Activated B cell treated with CpG ODN at 0.5 μM for 24 hours (primary cell): ENCODE measurements at regions of chr17 and their contacts with region 1.

Region 1: DNA sequence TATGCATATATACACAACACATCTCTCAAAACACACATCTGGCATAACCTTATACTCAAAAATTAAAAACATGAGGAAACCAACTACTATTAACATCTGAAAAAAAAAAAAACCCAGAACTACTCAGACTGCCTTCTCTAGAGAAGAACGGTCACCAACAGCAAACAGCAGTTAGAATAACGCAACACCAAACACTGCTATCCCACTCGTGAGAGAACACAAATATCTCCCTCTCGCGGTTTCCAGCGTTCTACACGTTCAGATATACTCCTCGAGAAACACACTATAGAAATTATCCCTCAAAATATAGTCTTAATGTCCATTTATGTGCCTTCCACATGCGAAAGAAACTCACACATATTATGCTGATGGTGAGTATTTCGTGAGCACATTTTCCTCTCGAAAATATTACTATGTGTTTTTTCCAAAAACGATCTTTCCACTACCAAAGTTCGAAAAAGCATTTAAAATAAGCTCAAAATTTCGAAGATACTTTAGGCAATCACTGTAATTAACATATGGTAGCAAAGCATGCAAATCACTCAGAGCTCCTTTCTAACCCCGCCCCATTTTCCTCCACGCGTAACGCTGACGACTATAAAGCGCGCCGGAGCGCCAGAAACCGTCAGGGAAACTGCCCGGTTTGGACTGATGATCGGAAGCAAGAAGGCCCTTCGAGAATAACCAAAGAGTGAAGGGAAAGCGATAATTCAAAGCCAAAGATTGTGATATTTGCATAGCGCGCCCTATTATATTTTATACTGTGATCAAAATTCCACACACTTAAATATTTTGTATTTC is 60.1 kb downstream of the TEX14 start:
- DNase-seq: peak; percentile 91
- ATAC-seq: peak; percentile 83
- H3K4me3 Mint-ChIP-seq: no peak overlapping the region
- H3K27ac Mint-ChIP-seq: no peak overlapping the region
- H3K4me1 Mint-ChIP-seq: peaks cover 3% of the 10 kb centered on the region
- H3K27me3 Mint-ChIP-seq: no peaks in the 10 kb centered on the region
- CTCF ChIP-seq: no peak

Region 2: DNA sequence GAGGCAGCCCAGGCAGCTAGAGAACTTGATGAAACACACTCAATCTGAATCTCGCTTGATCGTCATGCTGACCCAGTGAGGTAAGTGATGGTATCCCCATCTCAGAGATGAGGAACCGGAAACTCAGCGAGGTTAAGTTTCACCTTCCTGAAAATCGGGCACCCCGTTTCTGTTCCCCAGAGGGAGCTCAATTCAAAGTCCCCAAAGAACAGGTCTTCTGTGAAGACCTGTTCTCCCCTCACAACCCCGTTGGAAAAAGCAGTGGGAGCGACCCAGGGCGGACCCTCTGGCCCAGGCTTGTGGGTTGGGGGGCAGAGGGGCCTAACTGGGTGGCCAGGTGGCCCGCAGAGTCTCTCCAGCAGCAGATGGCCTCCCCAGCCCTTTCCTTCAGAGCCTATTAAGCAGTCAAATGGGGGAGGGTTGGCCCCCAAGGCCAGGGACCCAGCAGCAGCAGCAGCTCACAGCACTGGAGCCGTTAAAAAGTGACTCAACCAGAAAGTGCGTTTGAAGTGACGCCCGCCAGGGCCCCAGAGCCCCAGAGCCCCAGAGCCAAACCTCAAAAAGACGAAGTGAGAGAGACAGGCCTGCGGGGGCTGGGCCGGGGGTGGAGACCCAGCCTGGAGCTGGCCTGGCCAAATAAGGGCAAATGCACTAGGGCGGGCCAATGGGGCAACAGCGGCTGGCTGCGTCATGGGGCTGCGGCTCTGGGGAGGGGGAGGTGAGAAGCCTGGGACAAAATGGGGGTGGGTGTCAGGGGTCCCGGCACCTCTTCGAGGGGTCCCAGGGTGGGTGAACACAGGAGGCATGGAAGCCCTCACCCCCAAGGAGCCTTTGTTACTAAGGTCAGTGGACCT is 293.9 kb before region 1 on chr17:
- CTCF ChIA-PET with region 1: no interaction called
- POLR2A ChIA-PET with region 1: interaction called, 48 read pairs
- intact Hi-C with region 1: loop called (anchors 5 kb)
- DNase-seq: peak; percentile 84
- ATAC-seq: peak; percentile 63
- H3K4me3 Mint-ChIP-seq: peak overlapping the region; percentile 100
- H3K27ac Mint-ChIP-seq: peak overlapping the region; percentile 99
- H3K4me1 Mint-ChIP-seq: peaks cover 97% of the 10 kb centered on the region
- H3K27me3 Mint-ChIP-seq: no peaks in the 10 kb centered on the region
- CTCF ChIP-seq: no peak

Region 3: DNA sequence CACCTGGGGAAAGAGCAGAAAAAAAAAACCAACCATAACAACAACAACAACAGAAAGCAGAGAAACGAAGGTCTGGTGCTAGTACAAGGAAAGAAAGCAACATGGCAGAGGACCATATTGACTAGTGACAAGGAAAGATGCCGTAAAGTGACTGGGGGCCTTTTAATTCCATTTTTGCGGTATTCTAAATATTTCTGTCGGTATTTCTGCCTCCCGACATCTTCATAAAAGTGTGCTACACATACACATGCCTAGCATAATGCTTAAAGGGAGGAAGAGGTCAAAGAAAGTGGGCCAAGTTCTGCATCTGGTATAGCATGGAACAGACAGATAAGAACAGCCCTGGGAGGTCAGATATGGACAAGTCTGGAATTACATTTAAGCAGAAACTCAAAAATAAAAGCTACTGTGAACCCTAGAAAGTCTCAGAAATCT is 194.9 kb before region 1 on chr17:
- CTCF ChIA-PET with region 1: no interaction called
- POLR2A ChIA-PET with region 1: no interaction called
- intact Hi-C with region 1: no loop called
- DNase-seq: no peak
- ATAC-seq: no peak
- H3K4me3 Mint-ChIP-seq: no peak overlapping the region
- H3K27ac Mint-ChIP-seq: no peak overlapping the region
- H3K4me1 Mint-ChIP-seq: no peaks in the 10 kb centered on the region
- H3K27me3 Mint-ChIP-seq: no peaks in the 10 kb centered on the region
- CTCF ChIP-seq: no peak

Region 4: DNA sequence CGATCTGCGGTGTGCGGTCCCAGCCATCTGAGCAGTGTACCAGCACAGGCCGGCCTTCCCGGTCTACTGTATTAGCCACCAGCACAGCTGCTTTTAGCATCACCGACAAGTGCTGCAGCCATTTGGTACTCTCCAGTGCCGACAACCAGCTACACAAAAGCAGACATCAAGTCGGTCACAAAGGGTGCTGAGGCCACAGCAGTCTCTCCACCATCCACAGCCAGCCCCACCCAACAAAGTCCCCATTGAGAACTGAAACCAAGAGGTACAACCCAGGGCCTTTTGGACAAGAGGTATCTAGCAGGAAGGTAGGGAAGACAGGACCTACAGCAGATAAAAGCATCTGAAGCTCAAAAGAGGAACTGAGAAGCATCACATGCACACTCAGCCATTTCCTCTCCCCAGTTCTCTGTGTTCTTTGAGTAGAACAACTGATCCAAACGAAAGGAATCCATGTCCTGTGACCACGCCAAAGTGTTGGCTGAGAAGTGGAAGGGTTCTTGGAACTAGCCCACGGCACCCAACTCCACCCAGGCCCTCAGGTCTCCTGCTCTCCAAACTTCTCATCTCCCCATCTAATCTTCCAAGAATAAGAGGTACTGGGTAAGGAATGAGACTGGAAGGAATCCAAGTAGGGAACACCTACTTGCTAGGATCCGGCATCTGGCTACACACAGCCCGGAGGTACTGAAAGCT is 126.7 kb before region 1 on chr17:
- CTCF ChIA-PET with region 1: no interaction called
- POLR2A ChIA-PET with region 1: interaction called, 26 read pairs
- intact Hi-C with region 1: no loop called
- DNase-seq: peak; percentile 44
- ATAC-seq: peak; percentile 94
- H3K4me3 Mint-ChIP-seq: peak overlapping the region; percentile 64
- H3K27ac Mint-ChIP-seq: peak overlapping the region; percentile 97
- H3K4me1 Mint-ChIP-seq: peaks cover 28% of the 10 kb centered on the region
- H3K27me3 Mint-ChIP-seq: no peaks in the 10 kb centered on the region
- CTCF ChIP-seq: no peak

Region 5: DNA sequence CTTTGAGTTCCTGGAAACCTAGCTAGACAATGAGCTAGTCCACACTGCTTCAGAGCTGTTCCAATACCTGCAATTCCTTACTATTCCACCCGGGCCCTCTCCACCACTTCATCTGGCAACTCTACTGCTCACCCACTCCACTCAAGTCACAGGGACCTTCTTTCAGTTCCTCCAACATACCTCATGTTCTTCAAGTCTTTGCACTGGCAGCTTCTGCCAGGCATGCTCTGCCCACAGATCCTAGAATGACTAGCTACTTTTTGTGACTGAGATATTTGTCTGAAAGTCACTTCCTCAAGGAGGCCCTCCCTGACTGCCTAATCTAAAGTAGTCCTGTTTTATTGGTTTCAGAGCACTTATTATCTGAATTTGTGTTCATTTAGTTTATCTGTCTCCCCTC is 26.3 kb before region 1 on chr17:
- CTCF ChIA-PET with region 1: no interaction called
- POLR2A ChIA-PET with region 1: interaction called, 14 read pairs
- intact Hi-C with region 1: no loop called
- DNase-seq: no peak
- ATAC-seq: peak; percentile 42
- H3K4me3 Mint-ChIP-seq: no peak overlapping the region
- H3K27ac Mint-ChIP-seq: no peak overlapping the region
- H3K4me1 Mint-ChIP-seq: no peaks in the 10 kb centered on the region
- H3K27me3 Mint-ChIP-seq: no peaks in the 10 kb centered on the region
- CTCF ChIP-seq: no peak

Region 6: DNA sequence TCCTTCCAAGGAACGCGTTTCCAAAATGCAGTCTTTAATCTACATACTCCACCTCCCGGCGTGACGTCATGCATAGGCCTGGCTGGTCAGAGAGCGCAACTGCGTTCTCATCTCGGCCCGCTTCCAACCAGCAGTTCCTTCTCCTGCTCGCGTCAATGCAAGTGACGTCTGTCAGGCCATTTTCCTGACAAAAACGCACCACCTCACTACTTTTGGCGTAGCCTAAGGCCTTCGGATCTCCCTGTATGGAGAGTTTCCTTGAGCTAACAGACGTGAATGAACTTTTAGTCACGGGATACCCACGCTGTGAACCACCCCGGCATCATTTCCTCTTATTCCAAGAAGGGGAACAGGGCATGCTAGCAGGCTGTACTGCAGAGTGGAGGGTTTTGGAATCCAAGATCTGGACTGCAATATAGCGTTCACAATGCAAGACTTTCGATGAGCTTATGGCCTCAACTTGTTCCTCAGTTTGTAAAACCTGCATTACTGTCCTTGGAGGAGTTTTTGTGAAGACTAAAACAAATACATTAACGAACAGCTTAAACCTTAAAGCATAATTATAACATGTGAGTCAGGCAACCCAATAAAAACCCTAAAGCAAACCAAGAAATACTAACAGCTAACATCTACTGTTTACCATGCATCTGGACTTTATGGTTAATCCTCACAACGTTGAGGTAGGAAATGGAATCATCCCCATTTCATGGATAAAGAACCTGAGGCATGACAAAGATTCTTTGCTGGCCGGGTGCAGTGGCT is 35.3 kb after region 1 on chr17:
- CTCF ChIA-PET with region 1: no interaction called
- POLR2A ChIA-PET with region 1: interaction called, 321 read pairs
- intact Hi-C with region 1: no loop called
- DNase-seq: peak; percentile 23
- ATAC-seq: peak; percentile 47
- H3K4me3 Mint-ChIP-seq: peak overlapping the region; percentile 66
- H3K27ac Mint-ChIP-seq: no peak overlapping the region
- H3K4me1 Mint-ChIP-seq: peaks cover 8% of the 10 kb centered on the region
- H3K27me3 Mint-ChIP-seq: peaks cover 16% of the 10 kb centered on the region
- CTCF ChIP-seq: no peak

Region 7: DNA sequence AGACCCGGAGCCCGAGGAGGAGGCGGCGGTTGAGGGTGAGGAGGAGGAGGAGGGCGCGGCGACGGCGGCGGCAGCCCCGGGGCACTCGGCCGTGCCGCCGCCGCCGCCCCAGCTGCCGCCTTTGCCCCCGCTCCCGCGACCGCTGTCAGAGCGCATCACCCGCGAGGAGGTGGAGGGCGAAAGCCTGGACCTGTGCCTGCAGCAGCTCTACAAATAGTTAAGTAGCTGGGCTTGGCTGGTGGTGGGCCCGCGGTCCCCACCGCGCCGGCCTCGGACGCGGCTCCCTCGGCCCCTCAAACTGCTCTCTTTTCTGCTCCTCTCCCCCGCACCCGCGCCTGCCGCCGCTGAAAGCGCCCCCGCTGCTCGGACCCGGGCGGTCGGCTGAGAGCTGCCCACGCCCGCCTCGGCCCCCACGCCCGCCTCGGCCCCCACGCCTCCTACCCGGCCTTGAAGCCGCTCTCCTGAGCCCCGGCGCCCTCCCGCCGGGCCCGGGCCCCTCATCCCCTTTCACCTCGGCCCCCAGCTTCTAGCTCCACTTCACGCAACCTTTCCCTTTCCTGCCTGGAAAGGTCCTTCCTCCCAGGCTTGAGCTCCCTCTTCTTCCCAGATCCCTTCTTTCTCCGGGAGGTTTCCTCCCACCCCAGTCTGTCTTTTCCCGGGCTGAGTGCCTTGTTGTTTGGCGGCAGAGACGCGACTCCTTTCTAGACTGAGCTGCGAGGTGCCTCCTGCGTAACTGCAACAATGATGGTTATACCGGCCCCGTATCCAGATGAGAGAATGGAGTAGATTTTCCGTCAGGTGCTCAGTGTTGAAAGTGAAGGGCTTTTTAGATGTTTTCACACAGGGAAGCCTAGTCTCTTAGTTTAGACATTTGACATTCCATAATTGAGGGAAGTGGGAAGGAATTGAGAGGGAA is 124.8 kb after region 1 on chr17:
- CTCF ChIA-PET with region 1: no interaction called
- POLR2A ChIA-PET with region 1: no interaction called
- intact Hi-C with region 1: no loop called
- DNase-seq: peak; percentile 15
- ATAC-seq: peak; percentile 45
- H3K4me3 Mint-ChIP-seq: peak overlapping the region; percentile 92
- H3K27ac Mint-ChIP-seq: no peak overlapping the region
- H3K4me1 Mint-ChIP-seq: peaks cover 17% of the 10 kb centered on the region
- H3K27me3 Mint-ChIP-seq: peaks cover 43% of the 10 kb centered on the region
- CTCF ChIP-seq: no peak

Region 8: GRCh38 chr17:58782833-58783779 is 151.4 kb after region 1 on chr17:
- CTCF ChIA-PET with region 1: no interaction called
- POLR2A ChIA-PET with region 1: no interaction called
- intact Hi-C with region 1: no loop called
- DNase-seq: no peak
- ATAC-seq: no peak
- H3K4me3 Mint-ChIP-seq: no peak overlapping the region
- H3K27ac Mint-ChIP-seq: no peak overlapping the region
- H3K4me1 Mint-ChIP-seq: no peaks in the 10 kb centered on the region
- H3K27me3 Mint-ChIP-seq: peaks cover 2% of the 10 kb centered on the region
- CTCF ChIP-seq: no peak

Region 9: DNA sequence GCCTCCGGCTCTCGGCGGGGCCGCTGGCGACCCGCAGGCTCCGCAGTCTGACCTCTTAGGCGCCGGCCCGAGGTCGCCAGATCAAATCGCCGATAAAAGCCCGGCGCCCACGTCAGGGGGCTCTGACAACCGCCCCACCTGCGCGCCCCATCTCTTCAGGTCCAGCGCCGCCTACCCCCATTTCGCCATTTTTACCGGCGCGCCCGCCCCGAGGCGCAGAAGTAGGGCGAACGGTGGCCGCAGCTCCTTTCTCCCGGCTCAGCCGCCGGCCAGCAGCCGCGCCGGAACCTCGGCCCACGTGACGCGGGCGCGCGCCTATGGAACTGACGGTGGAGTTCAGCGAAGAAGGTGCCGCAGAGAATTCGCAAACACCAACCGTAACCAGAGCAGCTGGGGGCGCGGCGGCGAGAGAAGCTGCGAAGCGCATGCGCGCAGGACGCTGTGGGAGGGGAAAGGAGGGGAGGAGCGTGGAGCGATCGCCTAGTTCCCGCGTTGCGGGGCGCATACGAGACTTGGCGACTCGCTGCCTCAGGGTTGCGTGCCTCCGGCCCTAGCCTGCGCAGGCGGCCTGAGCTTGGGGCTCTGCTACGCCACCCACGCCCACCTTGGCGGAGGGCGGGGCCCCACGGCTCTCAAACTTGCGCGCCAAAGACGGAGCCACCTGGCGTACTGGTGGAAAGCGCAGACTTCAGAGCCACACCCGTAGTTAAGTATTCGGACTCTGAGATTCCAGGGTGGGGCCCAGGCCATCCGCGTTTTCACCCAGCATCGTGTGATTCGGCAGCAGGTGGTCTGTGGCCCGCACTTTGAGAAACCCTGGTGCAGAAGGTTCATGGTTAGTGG is 475.0 kb after region 1 on chr17 and contains the start of gene TRIM37:
- CTCF ChIA-PET with region 1: no interaction called
- POLR2A ChIA-PET with region 1: interaction called, 18 read pairs
- intact Hi-C with region 1: loop called (anchors 2 kb)
- DNase-seq: peak; percentile 98
- ATAC-seq: peak; percentile 96
- H3K4me3 Mint-ChIP-seq: peak within 1 kb of the TSS; percentile 94
- H3K27ac Mint-ChIP-seq: peak within 1 kb of the TSS; percentile 82
- H3K4me1 Mint-ChIP-seq: peaks cover 28% of the 10 kb centered on the region
- H3K27me3 Mint-ChIP-seq: no peaks in the 10 kb centered on the region
- CTCF ChIP-seq: no peak
- total RNA-seq, gene TRIM37: 16.4 and 17.3 TPM in 2 replicates

Region 10: DNA sequence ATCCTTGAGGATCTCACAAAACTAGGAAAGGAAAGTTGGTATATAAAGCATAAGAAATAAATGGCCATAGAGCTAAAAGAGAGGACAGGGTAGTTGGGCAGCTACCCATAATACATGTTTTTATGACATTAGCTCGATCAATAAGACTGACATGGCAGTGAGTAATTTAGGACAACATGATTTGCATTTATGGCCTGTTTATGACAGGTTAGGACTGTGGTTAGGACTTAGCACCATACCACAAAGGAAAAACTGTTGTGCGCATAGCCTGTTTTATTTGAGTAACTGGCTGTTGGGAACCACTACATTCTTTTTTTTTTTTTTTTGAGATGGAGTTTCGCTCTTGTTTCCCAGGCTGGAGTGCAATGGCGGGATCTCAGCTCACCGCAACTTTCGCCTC is 492.9 kb after region 1 on chr17:
- CTCF ChIA-PET with region 1: no interaction called
- POLR2A ChIA-PET with region 1: no interaction called
- intact Hi-C with region 1: no loop called
- DNase-seq: no peak
- ATAC-seq: no peak
- H3K4me3 Mint-ChIP-seq: no peak overlapping the region
- H3K27ac Mint-ChIP-seq: no peak overlapping the region
- H3K4me1 Mint-ChIP-seq: peaks cover 8% of the 10 kb centered on the region
- H3K27me3 Mint-ChIP-seq: no peaks in the 10 kb centered on the region
- CTCF ChIP-seq: no peak